Activated CD4-positive, alpha-beta T cell treated with anti-CD3 and anti-CD28 coated beads, Interleukin-2, amount 10 ng/mL, durations not matched to agents 24 days and 14 days (primary cell): ENCODE measurements at regions of chr7 and their contacts with region 1.

Region 1: DNA sequence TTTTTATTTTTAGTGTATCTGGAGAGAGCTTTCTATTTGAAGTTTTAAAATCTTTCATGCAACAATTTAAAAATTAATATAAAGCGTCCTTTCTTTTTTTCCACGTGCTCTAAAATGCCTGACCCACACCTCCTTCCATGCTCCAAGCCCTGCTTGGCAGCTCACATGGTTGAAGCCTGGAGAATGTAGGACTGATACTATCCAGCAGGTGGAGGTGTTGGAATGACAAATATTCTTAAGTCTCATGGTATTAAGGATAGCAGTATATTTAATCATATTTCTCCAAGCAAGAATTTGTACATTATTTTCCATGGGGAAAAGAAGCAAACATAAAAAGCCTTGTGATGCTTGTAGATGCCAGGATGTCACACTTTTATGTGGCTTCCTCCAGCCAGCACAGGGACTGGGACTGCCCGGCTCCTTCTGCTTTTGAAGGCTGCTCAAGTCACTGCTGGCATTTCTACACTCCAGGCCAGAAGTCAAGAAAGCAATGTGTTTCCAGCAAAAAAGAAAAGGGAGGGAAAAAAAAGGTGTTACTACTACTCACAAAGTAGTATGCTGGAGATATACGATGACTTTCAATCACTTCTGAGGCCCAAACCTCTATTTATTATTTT is 49.7 kb downstream of the BZW2 start:
- DNase-seq: no peak
- H3K4me3 Mint-ChIP-seq: no peak overlapping the region
- H3K27ac Mint-ChIP-seq: no peak overlapping the region
- H3K4me1 Mint-ChIP-seq: peaks cover 3% of the 10 kb centered on the region
- H3K27me3 Mint-ChIP-seq: no peaks in the 10 kb centered on the region

Region 2: GRCh38 chr7:16753102-16753931 is 57.6 kb after region 1 on chr7 and contains the start of gene TSPAN13:
- intact Hi-C with region 1: loop called (anchors 5 kb)
- DNase-seq: peak; percentile 90
- H3K4me3 Mint-ChIP-seq: peak within 1 kb of the TSS; percentile 77
- H3K27ac Mint-ChIP-seq: no peak within 1 kb of the TSS
- H3K4me1 Mint-ChIP-seq: peaks cover 8% of the 10 kb centered on the region
- H3K27me3 Mint-ChIP-seq: peaks cover 44% of the 10 kb centered on the region
- total RNA-seq, gene TSPAN13: 0.91 and 1.1 TPM in 2 replicates